A549 (cell line): ENCODE measurements at regions of chr4 and their contacts with region 1.

Region 1: GRCh38 chr4:102826890-102827673 is at the start of gene UBE2D3:
- DNase-seq: peak; percentile 24 to 97
- ATAC-seq: peak; percentile 68 to 73
- H3K4me3 ChIP-seq: peak within 1 kb of the TSS; percentile 95
- H3K27ac ChIP-seq: peak within 1 kb of the TSS; percentile 100
- H3K4me1 ChIP-seq: peaks cover 32% of the 10 kb centered on the region
- CTCF ChIP-seq: no peak
- EP300 ChIP-seq: peak in 1 of 2 experiments; percentile 39; a peak in 1 of 5 replicates
- POLR2A ChIP-seq: peak; percentile 74
- RAD21 ChIP-seq: peak in 1 of 2 experiments; percentile 2; a peak in 1 of 5 replicates
- polyA plus RNA-seq, gene UBE2D3: 254 and 338 TPM in 2 replicates

Region 2: GRCh38 chr4:102430461-102430910 is 396.6 kb before region 1 on chr4:
- CTCF ChIA-PET with region 1: interaction called, 3 read pairs
- POLR2A ChIA-PET with region 1: interaction called, 13 read pairs
- DNase-seq: peak in 1 of 2 experiments; percentile 27
- ATAC-seq: no peak; a peak in 1 of 6 replicates
- H3K4me3 ChIP-seq: peak overlapping the region; percentile 75
- H3K27ac ChIP-seq: peak overlapping the region; percentile 93 to 97
- H3K4me1 ChIP-seq: peaks cover 8% of the 10 kb centered on the region
- CTCF ChIP-seq: no peak
- EP300 ChIP-seq: no peak
- POLR2A ChIP-seq: no peak
- RAD21 ChIP-seq: no peak

Region 3: GRCh38 chr4:102723511-102723910 is 103.6 kb before region 1 on chr4:
- CTCF ChIA-PET with region 1: no interaction called
- POLR2A ChIA-PET with region 1: no interaction called
- DNase-seq: no peak
- ATAC-seq: no peak
- H3K4me3 ChIP-seq: no peak overlapping the region
- H3K27ac ChIP-seq: no peak overlapping the region
- H3K4me1 ChIP-seq: no peaks in the 10 kb centered on the region
- CTCF ChIP-seq: no peak
- EP300 ChIP-seq: no peak
- POLR2A ChIP-seq: no peak
- RAD21 ChIP-seq: no peak

Region 4: DNA sequence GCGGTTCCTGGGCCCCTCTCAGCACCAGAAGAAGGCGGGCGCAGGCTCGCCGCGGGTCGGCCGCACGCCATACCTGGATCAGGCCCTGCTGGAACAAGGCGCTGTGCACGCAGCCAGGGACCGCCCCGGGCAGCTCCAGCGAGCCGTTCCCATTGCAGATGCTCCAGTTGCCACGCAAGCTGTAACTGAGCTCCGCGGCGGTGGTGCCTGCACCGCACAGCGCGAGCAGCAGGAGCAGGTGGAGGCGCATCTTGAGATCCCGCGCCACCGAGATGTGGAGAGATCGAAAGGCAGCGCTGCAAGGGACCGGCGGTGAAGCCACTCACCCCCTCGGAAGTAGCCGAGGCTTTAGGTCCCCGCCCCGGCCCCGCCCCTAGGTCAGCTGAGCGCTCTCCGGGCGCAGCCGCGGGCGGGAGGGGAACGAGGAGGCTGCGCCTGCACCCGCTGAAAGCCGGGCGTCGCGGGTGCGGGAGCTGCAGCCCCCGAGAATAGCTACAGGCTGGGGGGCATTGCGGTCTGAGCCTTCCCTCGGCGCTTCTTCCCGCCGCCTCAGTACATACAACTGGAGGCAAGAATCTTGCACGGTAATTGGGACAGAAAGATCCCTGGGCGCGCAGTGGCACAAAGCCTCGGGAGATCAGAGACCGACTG is 66.3 kb before region 1 on chr4 and contains the start of gene MANBA:
- CTCF ChIA-PET with region 1: no interaction called
- POLR2A ChIA-PET with region 1: interaction called, 22 read pairs
- DNase-seq: peak; percentile 72 to 85
- ATAC-seq: peak; percentile 98
- H3K4me3 ChIP-seq: peak within 1 kb of the TSS; percentile 57
- H3K27ac ChIP-seq: peak within 1 kb of the TSS; percentile 82 to 87
- H3K4me1 ChIP-seq: peaks cover 14% of the 10 kb centered on the region; the same call in 2 of the 3 replicates
- CTCF ChIP-seq: no peak
- EP300 ChIP-seq: no peak
- POLR2A ChIP-seq: peak; percentile 72
- RAD21 ChIP-seq: peak in 1 of 2 experiments; percentile 20; a peak in 1 of 5 replicates
- polyA plus RNA-seq, gene MANBA: 10.4 and 12.4 TPM in 2 replicates

Region 5: DNA sequence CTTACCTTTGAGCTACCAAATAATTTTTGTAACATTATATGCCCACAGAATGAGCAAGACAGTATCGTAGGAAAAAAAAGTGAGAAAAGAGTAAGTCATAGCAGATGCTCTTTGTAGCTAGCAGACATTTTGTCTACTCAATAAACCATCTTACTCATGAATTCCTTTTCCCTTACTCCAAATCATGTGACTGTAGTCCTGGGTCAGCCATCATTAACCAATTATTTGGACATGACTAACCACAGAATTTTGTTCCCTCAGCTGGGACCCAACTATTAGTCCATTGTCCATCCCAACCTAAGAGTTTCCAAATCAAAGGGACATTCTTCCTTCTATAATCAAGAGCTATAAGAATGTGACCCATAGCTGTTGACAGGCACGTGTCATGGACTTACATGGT is 11.1 kb before region 1 on chr4:
- CTCF ChIA-PET with region 1: interaction called, 5 read pairs
- POLR2A ChIA-PET with region 1: interaction called, 19 read pairs
- DNase-seq: peak; percentile 29 to 30
- ATAC-seq: peak; percentile 71 to 73; a peak in 5 of 6 replicates
- H3K4me3 ChIP-seq: no peak overlapping the region
- H3K27ac ChIP-seq: no peak overlapping the region
- H3K4me1 ChIP-seq: peaks cover 64% of the 10 kb centered on the region
- CTCF ChIP-seq: no peak
- EP300 ChIP-seq: no peak
- POLR2A ChIP-seq: no peak
- RAD21 ChIP-seq: no peak

Region 6: GRCh38 chr4:102868781-102869568 is 41.9 kb after region 1 on chr4 and contains the start of gene CISD2:
- CTCF ChIA-PET with region 1: interaction called, 4 read pairs
- POLR2A ChIA-PET with region 1: interaction called, 78 read pairs
- DNase-seq: peak; percentile 67 to 91
- ATAC-seq: peak; percentile 95 to 97
- H3K4me3 ChIP-seq: peak within 1 kb of the TSS; percentile 89
- H3K27ac ChIP-seq: peak within 1 kb of the TSS; percentile 92 to 95
- H3K4me1 ChIP-seq: peaks cover 24% of the 10 kb centered on the region
- CTCF ChIP-seq: no peak
- EP300 ChIP-seq: no peak
- POLR2A ChIP-seq: peak; percentile 79
- RAD21 ChIP-seq: no peak
- polyA plus RNA-seq, gene CISD2: 59.1 and 84.1 TPM in 2 replicates